ENCODE measurements at regions of chr15 and their contacts with region 1.

Region 1: GRCh38 chr15:101014921-101015841 is 96.0 kb downstream of the LRRK1 start:
- DNase-seq: peak; percentile 59
- H3K4me3 ChIP-seq: no peak overlapping the region
- H3K27ac ChIP-seq: no peak overlapping the region
- H3K4me1 ChIP-seq: no peaks in the 10 kb centered on the region
- H3K27me3 ChIP-seq: no peaks in the 10 kb centered on the region
- CTCF ChIP-seq: peak; percentile 55 to 83 (median 82)
- POLR2A ChIP-seq: no peak

Region 2: GRCh38 chr15:100973351-100974111 is 41.6 kb before region 1 on chr15:
- intact Hi-C with region 1: no loop called
- DNase-seq: no peak
- H3K4me3 ChIP-seq: peak overlapping the region; percentile 19 to 36
- H3K27ac ChIP-seq: no peak overlapping the region
- H3K4me1 ChIP-seq: no peaks in the 10 kb centered on the region
- H3K27me3 ChIP-seq: no peaks in the 10 kb centered on the region
- CTCF ChIP-seq: no peak
- POLR2A ChIP-seq: no peak

Region 3: DNA sequence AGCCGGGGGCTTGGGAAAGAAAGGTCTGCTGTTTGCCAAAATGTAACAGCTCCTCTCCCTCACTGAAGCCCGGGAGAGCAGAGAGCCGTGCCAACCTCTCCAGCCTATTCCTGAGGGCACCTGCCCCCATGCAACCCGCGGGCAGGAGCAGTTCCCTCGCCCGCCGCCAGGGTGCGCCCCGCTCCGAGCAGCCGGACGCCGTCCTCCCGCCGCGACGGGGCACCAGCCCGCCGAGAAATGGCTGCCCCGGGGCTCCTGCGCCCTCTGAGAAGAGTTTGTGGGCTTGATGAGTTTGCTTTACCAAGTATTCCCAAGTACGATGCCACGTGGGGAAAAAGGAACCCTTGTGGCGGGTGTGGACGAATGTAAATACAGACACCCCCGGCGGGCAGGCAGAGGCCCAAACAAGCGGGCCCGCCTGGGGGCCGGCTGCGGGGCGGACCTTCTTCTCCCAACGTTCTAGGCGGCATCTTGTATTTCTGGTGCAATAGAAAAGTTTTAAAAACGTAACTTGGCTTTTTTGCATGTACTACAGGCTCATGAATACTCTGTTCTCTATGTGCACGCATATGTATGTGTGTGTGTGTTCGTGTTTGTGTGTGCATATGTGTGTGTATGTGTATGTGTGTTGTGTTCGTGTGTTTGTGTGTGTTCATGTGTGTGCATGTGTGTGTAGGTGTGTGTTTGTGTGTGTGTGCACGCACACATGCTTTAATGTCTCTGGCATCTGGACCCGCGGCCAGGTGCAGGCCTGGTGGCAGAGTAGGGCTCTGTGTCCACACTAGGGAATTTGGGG is 73.8 kb after region 1 on chr15:
- intact Hi-C with region 1: loop called (anchors 5 kb)
- DNase-seq: peak; percentile 59
- H3K4me3 ChIP-seq: peak overlapping the region in 1 of 2 donors; percentile 29
- H3K27ac ChIP-seq: peak overlapping the region in 1 of 2 donors; percentile 16
- H3K4me1 ChIP-seq: no peaks in the 10 kb centered on the region
- H3K27me3 ChIP-seq: no peaks in the 10 kb centered on the region
- CTCF ChIP-seq: peak; percentile 98 to 99 (median 98)
- POLR2A ChIP-seq: no peak

Region 4: DNA sequence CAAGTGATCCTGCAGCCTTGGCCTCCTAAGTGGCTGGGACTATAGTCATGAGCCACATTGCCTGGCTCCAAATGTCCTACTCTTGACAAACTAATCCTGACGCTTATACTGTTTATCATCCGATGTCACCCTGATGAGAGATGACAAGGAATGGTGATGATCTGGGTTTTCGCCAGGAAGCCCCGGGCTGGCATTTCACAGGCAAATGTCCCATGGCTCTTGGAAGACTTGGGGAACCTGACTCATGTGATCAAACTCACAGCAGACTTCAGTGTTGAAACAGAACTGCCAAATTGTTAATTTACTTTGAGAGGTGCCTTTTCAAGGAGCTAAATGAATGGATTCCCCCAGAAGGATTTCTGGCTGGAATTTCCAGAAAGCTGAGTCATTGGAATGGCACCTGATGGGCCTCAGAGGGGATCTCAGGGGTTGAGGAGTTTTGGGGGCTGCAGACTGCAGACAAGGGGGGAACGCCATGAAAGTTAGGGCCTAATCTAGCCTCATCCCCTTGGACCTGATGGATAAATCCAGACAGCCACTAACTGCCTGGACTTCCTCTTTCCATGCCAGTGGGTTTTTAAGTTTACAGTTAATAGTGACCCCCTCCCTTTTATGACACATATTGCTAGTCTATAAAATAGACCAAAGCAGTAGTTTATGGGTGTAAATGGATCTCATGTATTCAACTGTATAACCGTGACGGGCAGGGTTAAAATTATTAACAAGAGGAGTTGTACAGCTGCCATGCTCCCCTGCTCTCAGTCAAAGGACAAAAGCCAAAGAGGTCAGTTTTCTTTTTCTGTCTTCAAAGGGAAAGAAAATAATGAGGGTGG is 90.1 kb after region 1 on chr15:
- intact Hi-C with region 1: no loop called
- DNase-seq: no peak
- H3K4me3 ChIP-seq: no peak overlapping the region
- H3K27ac ChIP-seq: no peak overlapping the region
- H3K4me1 ChIP-seq: no peaks in the 10 kb centered on the region
- H3K27me3 ChIP-seq: no peaks in the 10 kb centered on the region
- CTCF ChIP-seq: no peak
- POLR2A ChIP-seq: no peak

Region 5: DNA sequence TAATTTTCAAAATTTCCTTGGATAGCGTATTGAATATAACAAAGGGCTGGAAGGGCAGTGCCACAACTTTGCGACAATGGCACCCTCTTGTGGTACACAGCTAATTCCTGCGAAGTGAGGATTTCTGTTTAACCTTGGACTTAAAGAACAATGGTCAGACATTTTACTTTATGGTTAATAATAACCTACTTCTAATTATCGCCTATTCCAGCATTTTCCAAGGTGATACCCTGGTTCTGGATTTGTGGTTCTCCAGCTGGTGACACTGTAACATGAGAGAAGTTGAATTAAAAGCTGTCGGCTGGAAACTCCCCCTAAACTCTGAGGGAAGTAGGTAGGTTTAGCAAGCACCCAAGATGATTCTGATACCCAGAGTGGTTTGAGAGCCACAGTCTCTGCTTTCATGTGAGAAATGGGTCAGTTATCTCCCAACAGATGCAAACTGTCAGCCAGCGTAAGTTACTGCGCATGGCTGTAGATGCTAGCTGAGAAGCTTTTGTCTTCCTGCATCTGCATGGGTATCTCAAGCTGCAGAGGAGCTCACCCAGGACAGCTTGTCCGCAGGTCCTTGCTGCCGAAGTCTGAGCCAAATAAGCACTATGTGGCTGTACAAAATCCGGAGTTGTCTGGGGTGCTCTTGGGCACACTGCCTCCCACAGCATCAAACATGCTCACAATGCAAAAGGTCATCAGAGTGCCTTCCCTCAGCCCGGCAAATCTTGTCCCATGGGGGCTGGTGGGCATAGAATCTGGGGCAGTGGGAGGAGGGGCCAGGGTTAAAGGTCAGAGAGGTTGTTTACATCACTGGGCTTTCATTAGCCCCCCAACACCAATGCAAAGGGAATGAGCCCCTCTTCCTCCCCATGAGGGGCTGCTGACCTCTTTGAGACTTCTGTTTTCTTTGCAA is 243.3 kb after region 1 on chr15:
- intact Hi-C with region 1: loop called (anchors 2 kb)
- DNase-seq: peak; percentile 60
- H3K4me3 ChIP-seq: no peak overlapping the region
- H3K27ac ChIP-seq: no peak overlapping the region
- H3K4me1 ChIP-seq: no peaks in the 10 kb centered on the region
- H3K27me3 ChIP-seq: no peaks in the 10 kb centered on the region
- CTCF ChIP-seq: peak; percentile 66 to 93 (median 88)
- POLR2A ChIP-seq: no peak